GM23248 (cell line): ENCODE measurements at regions of chr11 and their contacts with region 1.

Region 1: GRCh38 chr11:32323814-32324130 is 111.6 kb downstream of the WT1 start:
- DNase-seq: no peak
- H3K4me3 ChIP-seq: no peak overlapping the region
- H3K27ac ChIP-seq: no peak overlapping the region
- H3K4me1 ChIP-seq: no peaks in the 10 kb centered on the region
- H3K27me3 ChIP-seq: peaks cover 34% of the 10 kb centered on the region

Region 2: GRCh38 chr11:32751381-32751780 is 427.6 kb after region 1 on chr11:
- in situ Hi-C with region 1: no loop called
- DNase-seq: no peak
- H3K4me3 ChIP-seq: no peak overlapping the region
- H3K27ac ChIP-seq: no peak overlapping the region
- H3K4me1 ChIP-seq: no peaks in the 10 kb centered on the region
- H3K27me3 ChIP-seq: peaks cover 17% of the 10 kb centered on the region; the same call in 1 of the 2 replicates

Region 3: GRCh38 chr11:32792948-32793475 is 469.2 kb after region 1 on chr11:
- in situ Hi-C with region 1: loop called (anchors 5 kb)
- DNase-seq: peak; percentile 56
- H3K4me3 ChIP-seq: peak overlapping the region; percentile 65
- H3K27ac ChIP-seq: no peak overlapping the region
- H3K4me1 ChIP-seq: no peaks in the 10 kb centered on the region
- H3K27me3 ChIP-seq: peaks cover 29% of the 10 kb centered on the region; the same call in 1 of the 2 replicates